RWPE1 (cell line): ENCODE measurements at regions of chr1 and their contacts with region 1.

Region 1: GRCh38 chr1:160981584-160982411 is 27.2 kb upstream of the ITLN2 start:
- DNase-seq: no peak
- H3K27ac ChIP-seq: no peak overlapping the region
- CTCF ChIP-seq: no peak

Region 2: DNA sequence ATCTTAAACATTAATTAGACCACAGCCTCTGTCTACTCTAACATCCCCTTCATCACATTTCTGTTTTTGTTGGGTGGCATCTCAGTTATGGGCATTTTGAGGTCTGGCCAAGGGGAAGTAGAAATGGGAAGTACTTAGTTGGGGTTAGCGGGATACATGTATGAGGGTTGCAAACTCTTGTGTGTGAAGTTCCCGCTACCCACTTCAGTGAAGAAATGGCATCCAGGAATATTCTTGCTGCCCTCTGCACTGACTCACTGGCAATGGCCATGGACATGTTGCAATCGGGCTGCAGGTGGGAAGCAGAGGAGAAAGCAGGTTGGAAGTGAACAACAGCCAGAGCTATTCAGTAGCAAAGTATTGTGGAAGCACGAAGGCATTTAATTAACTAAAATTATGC is 277.5 kb before region 1 on chr1:
- CTCF ChIA-PET with region 1: interaction called, 10 read pairs
- POLR2A ChIA-PET with region 1: no interaction called
- DNase-seq: no peak
- H3K27ac ChIP-seq: no peak overlapping the region
- CTCF ChIP-seq: no peak

Region 3: GRCh38 chr1:160971618-160972056 is 10.2 kb before region 1 on chr1:
- CTCF ChIA-PET with region 1: no interaction called
- POLR2A ChIA-PET with region 1: no interaction called
- DNase-seq: no peak
- H3K27ac ChIP-seq: no peak overlapping the region
- CTCF ChIP-seq: no peak